ENCODE measurements at regions of chr11 and their contacts with region 1.

Region 1: GRCh38 chr11:111766093-111766833 is at the start of gene PPP2R1B:
- DNase-seq: peak; percentile 84 to 85
- H3K4me3 ChIP-seq: peak within 1 kb of the TSS; percentile 61
- H3K4me3 Mint-ChIP-seq: peak within 1 kb of the TSS; percentile 85
- H3K27ac Mint-ChIP-seq: peak within 1 kb of the TSS; percentile 84
- H3K4me1 ChIP-seq: peaks cover 10% of the 10 kb centered on the region
- H3K4me1 Mint-ChIP-seq: peaks cover 22% of the 10 kb centered on the region
- H3K27me3 ChIP-seq: no peaks in the 10 kb centered on the region
- H3K27me3 Mint-ChIP-seq: no peaks in the 10 kb centered on the region
- CTCF ChIP-seq: no peak
- total RNA-seq, gene PPP2R1B: 109 and 114 TPM in 2 replicates

Region 2: GRCh38 chr11:110896358-110896757 is 869.9 kb before region 1 on chr11:
- CTCF ChIA-PET with region 1: no interaction called
- POLR2A ChIA-PET with region 1: no interaction called
- intact Hi-C with region 1: no loop called
- DNase-seq: no peak
- H3K4me3 ChIP-seq: no peak overlapping the region
- H3K4me3 Mint-ChIP-seq: no peak overlapping the region
- H3K27ac Mint-ChIP-seq: no peak overlapping the region
- H3K4me1 ChIP-seq: no peaks in the 10 kb centered on the region
- H3K4me1 Mint-ChIP-seq: no peaks in the 10 kb centered on the region
- H3K27me3 ChIP-seq: no peaks in the 10 kb centered on the region
- H3K27me3 Mint-ChIP-seq: peaks cover 8% of the 10 kb centered on the region
- CTCF ChIP-seq: no peak

Region 3: GRCh38 chr11:111623527-111624030 is 142.7 kb before region 1 on chr11:
- CTCF ChIA-PET with region 1: no interaction called
- POLR2A ChIA-PET with region 1: interaction called, 8 read pairs
- intact Hi-C with region 1: loop called (anchors 1 kb)
- DNase-seq: peak; percentile 95 to 98
- H3K4me3 ChIP-seq: no peak overlapping the region
- H3K4me3 Mint-ChIP-seq: peak overlapping the region; percentile 59
- H3K27ac Mint-ChIP-seq: peak overlapping the region; percentile 78
- H3K4me1 ChIP-seq: peaks cover 58% of the 10 kb centered on the region
- H3K4me1 Mint-ChIP-seq: peaks cover 52% of the 10 kb centered on the region
- H3K27me3 ChIP-seq: no peaks in the 10 kb centered on the region
- H3K27me3 Mint-ChIP-seq: no peaks in the 10 kb centered on the region
- CTCF ChIP-seq: no peak

Region 4: DNA sequence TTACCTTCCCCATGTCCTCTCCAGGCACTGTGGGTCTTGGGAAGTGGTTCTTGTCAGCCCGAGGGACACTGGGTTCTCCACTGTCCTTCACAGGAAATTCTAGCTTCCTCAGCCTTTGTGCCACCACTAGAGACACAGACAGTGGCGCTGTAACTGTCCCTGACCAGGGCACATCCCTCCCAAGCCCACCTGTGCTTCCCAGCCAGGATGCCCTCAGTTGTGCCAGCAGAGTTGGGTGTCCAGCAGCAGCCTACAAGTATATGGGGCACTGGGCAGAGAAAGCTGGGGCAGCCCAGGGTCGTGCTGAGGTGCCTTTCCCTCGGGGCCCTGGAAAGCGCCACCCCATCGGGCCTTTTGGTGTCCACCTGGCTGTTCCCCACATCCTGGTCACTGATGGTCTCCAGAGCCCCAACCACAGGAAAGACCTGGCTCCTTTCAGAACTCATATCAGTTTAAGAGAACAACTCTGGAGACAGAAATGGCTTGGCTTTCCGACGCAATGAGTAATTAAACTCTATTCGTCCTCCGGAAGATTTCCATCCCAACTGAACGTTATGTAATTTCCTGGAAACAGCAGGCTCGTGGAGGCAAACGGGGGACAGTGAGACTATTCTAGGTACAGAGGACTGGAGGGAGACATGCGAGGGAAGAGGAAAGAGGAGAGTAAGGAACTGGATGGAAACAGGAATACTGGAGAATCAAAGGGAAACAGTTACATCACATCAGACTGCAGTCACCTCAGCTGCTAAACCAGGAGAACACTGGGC is 28.6 kb before region 1 on chr11:
- CTCF ChIA-PET with region 1: no interaction called
- POLR2A ChIA-PET with region 1: no interaction called
- intact Hi-C with region 1: loop called (anchors 2 kb)
- DNase-seq: no peak
- H3K4me3 ChIP-seq: no peak overlapping the region
- H3K4me3 Mint-ChIP-seq: no peak overlapping the region
- H3K27ac Mint-ChIP-seq: peak overlapping the region; percentile 29
- H3K4me1 ChIP-seq: peaks cover 13% of the 10 kb centered on the region
- H3K4me1 Mint-ChIP-seq: peaks cover 13% of the 10 kb centered on the region
- H3K27me3 ChIP-seq: no peaks in the 10 kb centered on the region
- H3K27me3 Mint-ChIP-seq: no peaks in the 10 kb centered on the region
- CTCF ChIP-seq: no peak

Region 5: DNA sequence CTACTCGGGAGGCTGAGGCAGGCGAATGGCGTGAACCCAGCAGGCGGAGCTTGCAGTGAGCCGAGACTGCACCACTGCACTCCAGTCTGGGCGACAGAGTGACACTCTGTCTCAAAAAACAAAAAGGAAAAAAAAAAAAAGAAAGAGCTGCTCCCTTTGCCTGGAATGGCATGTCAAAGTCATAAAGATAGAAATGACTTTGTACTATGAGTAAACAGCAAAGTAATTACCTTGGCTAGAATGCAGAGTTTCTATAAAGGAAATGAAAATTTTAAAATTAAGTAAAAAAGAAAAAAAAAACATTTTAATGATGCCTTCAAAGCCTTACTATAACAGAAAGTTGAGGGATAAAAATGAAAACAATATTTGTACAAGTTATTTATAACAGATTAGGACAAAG is 10.2 kb before region 1 on chr11:
- CTCF ChIA-PET with region 1: interaction called, 3 read pairs
- POLR2A ChIA-PET with region 1: interaction called, 17 read pairs
- intact Hi-C with region 1: loop called (anchors 1 kb)
- DNase-seq: no peak
- H3K4me3 ChIP-seq: no peak overlapping the region
- H3K4me3 Mint-ChIP-seq: no peak overlapping the region
- H3K27ac Mint-ChIP-seq: peak overlapping the region; percentile 90
- H3K4me1 ChIP-seq: peaks cover 21% of the 10 kb centered on the region
- H3K4me1 Mint-ChIP-seq: peaks cover 21% of the 10 kb centered on the region
- H3K27me3 ChIP-seq: no peaks in the 10 kb centered on the region
- H3K27me3 Mint-ChIP-seq: no peaks in the 10 kb centered on the region
- CTCF ChIP-seq: no peak

Region 6: GRCh38 chr11:111797145-111797581 is 30.9 kb after region 1 on chr11:
- CTCF ChIA-PET with region 1: no interaction called
- POLR2A ChIA-PET with region 1: interaction called, 4 read pairs
- intact Hi-C with region 1: loop called (anchors 1 kb)
- DNase-seq: no peak
- H3K4me3 ChIP-seq: no peak overlapping the region
- H3K4me3 Mint-ChIP-seq: no peak overlapping the region
- H3K27ac Mint-ChIP-seq: no peak overlapping the region
- H3K4me1 ChIP-seq: peaks cover 20% of the 10 kb centered on the region
- H3K4me1 Mint-ChIP-seq: peaks cover 21% of the 10 kb centered on the region
- H3K27me3 ChIP-seq: no peaks in the 10 kb centered on the region
- H3K27me3 Mint-ChIP-seq: no peaks in the 10 kb centered on the region
- CTCF ChIP-seq: no peak

Region 7: GRCh38 chr11:111833524-111833923 is 67.3 kb after region 1 on chr11:
- CTCF ChIA-PET with region 1: interaction called, 14 read pairs
- POLR2A ChIA-PET with region 1: interaction called, 4 read pairs
- intact Hi-C with region 1: no loop called
- DNase-seq: peak in 1 of 2 experiments; percentile 25
- H3K4me3 ChIP-seq: no peak overlapping the region
- H3K4me3 Mint-ChIP-seq: no peak overlapping the region
- H3K27ac Mint-ChIP-seq: no peak overlapping the region
- H3K4me1 ChIP-seq: peaks cover 9% of the 10 kb centered on the region; the same call in 1 of the 2 replicates
- H3K4me1 Mint-ChIP-seq: peaks cover 11% of the 10 kb centered on the region
- H3K27me3 ChIP-seq: no peaks in the 10 kb centered on the region
- H3K27me3 Mint-ChIP-seq: no peaks in the 10 kb centered on the region
- CTCF ChIP-seq: peak; percentile 24 to 42

Region 8: GRCh38 chr11:112074026-112074811 is 308.0 kb after region 1 on chr11 and contains the start of gene NKAPD1:
- CTCF ChIA-PET with region 1: no interaction called
- POLR2A ChIA-PET with region 1: no interaction called
- intact Hi-C with region 1: no loop called
- DNase-seq: peak; percentile 89 to 90
- H3K4me3 ChIP-seq: peak within 1 kb of the TSS; percentile 63
- H3K4me3 Mint-ChIP-seq: peak within 1 kb of the TSS; percentile 86
- H3K27ac Mint-ChIP-seq: peak within 1 kb of the TSS; percentile 98
- H3K4me1 ChIP-seq: no peaks in the 10 kb centered on the region
- H3K4me1 Mint-ChIP-seq: peaks cover 12% of the 10 kb centered on the region
- H3K27me3 ChIP-seq: no peaks in the 10 kb centered on the region
- H3K27me3 Mint-ChIP-seq: no peaks in the 10 kb centered on the region
- CTCF ChIP-seq: peak in 1 of 2 experiments; percentile 13
- total RNA-seq, gene NKAPD1: 36.9 and 37.4 TPM in 2 replicates

Measured in Caco-2 (cell line).